Activated B cell treated with CpG ODN at 0.5 μM for 24 hours (primary cell): ENCODE measurements at regions of chr3 and their contacts with region 1.

Region 1: DNA sequence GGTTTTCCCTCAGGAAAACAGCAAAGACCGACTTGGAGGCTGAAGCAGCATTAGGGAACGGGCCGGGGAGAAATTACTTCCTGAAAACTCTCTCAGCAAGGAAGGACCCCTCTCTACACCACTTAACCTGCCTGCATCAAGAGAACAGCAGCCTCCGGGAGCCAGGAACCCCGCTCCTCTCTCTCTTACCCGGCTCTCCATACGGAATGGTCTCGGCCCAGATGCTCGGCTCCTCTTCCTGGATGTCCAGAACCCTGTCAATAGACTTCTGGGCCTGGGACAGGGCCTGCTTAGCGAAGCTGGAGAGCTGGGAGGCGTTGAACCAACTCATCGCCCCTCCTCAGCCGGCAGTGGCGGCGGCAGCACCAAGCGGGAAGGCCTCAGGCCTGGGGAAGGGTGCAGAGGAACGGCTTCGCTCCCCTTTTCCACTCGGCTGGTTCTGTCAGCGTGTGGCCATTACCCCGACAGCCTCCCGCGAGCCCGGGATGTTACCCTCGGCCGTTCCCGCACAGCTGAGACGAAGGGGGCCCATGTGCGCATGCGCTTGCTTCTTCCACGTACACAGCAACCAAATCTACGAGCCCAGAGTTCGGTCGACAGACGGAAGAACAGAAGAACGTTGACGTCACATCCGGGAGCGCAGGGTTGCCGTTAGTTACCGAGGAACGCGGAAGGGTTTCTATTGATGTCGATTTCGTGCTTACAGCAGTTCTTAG is at the start of gene TMF1:
- DNase-seq: peak; percentile 92
- ATAC-seq: peak; percentile 86
- H3K4me3 Mint-ChIP-seq: peak within 1 kb of the TSS; percentile 95
- H3K27ac Mint-ChIP-seq: peak within 1 kb of the TSS; percentile 98
- H3K4me1 Mint-ChIP-seq: peaks cover 49% of the 10 kb centered on the region
- H3K27me3 Mint-ChIP-seq: no peaks in the 10 kb centered on the region
- CTCF ChIP-seq: no peak
- total RNA-seq, gene TMF1: 36.8 and 43.6 TPM in 2 replicates

Region 2: GRCh38 chr3:69013253-69014021 is 38.5 kb before region 1 on chr3 and contains the start of gene EOGT:
- CTCF ChIA-PET with region 1: interaction called, 3 read pairs
- POLR2A ChIA-PET with region 1: interaction called, 9 read pairs
- intact Hi-C with region 1: loop called (anchors 1 kb)
- DNase-seq: peak; percentile 80
- ATAC-seq: peak; percentile 88
- H3K4me3 Mint-ChIP-seq: peak within 1 kb of the TSS; percentile 85
- H3K27ac Mint-ChIP-seq: peak within 1 kb of the TSS; percentile 61
- H3K4me1 Mint-ChIP-seq: peaks cover 9% of the 10 kb centered on the region
- H3K27me3 Mint-ChIP-seq: no peaks in the 10 kb centered on the region
- CTCF ChIP-seq: no peak
- total RNA-seq, gene EOGT: 14.4 and 17.3 TPM in 2 replicates